PC-9 (cell line): ENCODE measurements at regions of chr4 and their contacts with region 1.

Region 1: GRCh38 chr4:185304944-185305690 is 90.6 kb downstream of the LRP2BP start:
- DNase-seq: no peak
- H3K4me3 ChIP-seq: no peak overlapping the region
- H3K27ac ChIP-seq: peak overlapping the region; percentile 31; the same call in 1 of the 2 replicates
- H3K4me1 ChIP-seq: peaks cover 15% of the 10 kb centered on the region
- H3K27me3 ChIP-seq: no peaks in the 10 kb centered on the region
- CTCF ChIP-seq: peak; percentile 29; the same call in 1 of the 2 replicates

Region 2: DNA sequence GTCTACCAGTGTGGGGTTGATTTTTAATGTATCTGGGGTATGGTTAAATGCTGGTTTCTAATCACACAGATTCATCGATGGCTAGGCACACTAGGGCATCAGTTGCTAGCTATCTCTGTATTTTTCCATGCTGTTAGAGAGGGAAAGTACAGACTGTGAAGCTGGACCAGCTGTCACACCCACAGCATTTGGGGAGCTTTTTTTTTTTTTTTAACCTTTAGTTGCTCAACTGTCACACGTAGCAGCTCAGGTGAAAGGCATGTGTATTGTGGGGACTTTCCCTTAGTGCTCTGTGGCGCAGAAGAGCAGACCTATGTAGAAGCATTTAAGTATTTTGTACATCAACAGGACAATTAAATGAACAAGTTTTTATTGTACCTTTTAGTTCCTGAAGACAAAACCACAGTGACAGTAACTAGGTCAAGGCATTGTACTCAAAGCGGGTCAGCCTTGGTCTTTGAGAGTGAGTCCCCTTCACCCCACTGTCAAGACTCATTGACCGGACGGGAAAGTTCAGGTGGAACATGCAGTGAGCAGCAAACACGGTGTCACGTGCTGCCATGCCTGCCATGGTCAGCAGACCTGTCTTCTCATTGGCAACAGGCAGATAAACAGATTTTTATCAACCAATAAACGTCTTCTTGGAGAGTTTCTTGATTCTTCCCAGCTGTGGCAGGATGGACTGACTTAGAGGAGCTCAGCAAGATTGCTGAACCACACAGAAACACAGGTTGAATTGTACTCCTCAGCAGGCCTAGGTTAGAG is 721.2 kb before region 1 on chr4:
- CTCF ChIA-PET with region 1: no interaction called
- POLR2A ChIA-PET with region 1: no interaction called
- intact Hi-C with region 1: no loop called
- DNase-seq: no peak
- H3K4me3 ChIP-seq: no peak overlapping the region
- H3K27ac ChIP-seq: no peak overlapping the region
- H3K4me1 ChIP-seq: no peaks in the 10 kb centered on the region
- H3K27me3 ChIP-seq: no peaks in the 10 kb centered on the region
- CTCF ChIP-seq: no peak

Region 3: GRCh38 chr4:185192059-185192458 is 113.1 kb before region 1 on chr4:
- CTCF ChIA-PET with region 1: no interaction called
- POLR2A ChIA-PET with region 1: no interaction called
- intact Hi-C with region 1: no loop called
- DNase-seq: no peak
- H3K4me3 ChIP-seq: no peak overlapping the region
- H3K27ac ChIP-seq: no peak overlapping the region
- H3K4me1 ChIP-seq: peaks cover 25% of the 10 kb centered on the region
- H3K27me3 ChIP-seq: no peaks in the 10 kb centered on the region
- CTCF ChIP-seq: no peak

Region 4: DNA sequence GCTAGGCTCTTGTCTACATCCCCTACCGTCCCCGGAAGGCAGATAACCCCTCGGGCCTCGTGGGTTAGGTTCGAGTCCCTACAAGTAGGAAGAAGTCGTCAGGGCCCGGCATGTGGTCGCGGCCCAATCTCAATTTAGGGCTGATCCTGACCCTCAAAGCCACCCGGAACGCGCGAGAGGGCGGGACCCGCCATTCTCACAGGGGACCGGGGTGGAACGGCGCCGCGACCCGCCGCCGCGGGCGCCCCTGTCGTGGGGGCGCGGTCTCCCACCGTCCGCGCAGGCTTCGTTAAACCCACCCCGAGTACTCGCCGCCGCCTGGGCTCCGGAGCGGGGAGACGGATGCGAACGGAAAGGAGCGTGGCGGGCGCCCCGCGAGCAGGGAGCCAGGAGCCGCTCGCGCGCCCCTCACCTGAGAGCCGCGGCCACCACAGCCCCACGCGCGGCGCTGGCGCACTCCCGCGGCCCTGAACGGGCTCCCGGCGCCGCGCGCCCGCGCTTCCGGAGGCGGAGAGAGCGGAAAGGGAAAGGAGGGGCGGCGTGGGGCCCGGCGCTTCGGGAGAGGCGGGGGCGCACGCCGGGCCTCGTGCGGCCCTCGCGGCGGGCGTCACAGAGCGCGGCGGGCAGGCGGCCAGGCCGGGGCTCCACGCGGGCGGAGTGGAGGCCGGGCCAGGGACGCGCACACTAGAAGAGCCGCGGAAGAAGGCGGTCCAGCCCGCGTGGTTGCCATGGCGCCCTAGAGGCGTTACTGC is 101.5 kb before region 1 on chr4 and contains the start of gene CFAP97:
- CTCF ChIA-PET with region 1: no interaction called
- POLR2A ChIA-PET with region 1: no interaction called
- intact Hi-C with region 1: loop called (anchors 5 kb)
- DNase-seq: peak; percentile 49 to 78
- H3K4me3 ChIP-seq: peak within 1 kb of the TSS; percentile 75
- H3K27ac ChIP-seq: peak within 1 kb of the TSS; percentile 76
- H3K4me1 ChIP-seq: peaks cover 35% of the 10 kb centered on the region
- H3K27me3 ChIP-seq: no peaks in the 10 kb centered on the region
- CTCF ChIP-seq: no peak
- total RNA-seq, gene CFAP97: 33.4 and 48.2 TPM in 2 replicates

Region 5: DNA sequence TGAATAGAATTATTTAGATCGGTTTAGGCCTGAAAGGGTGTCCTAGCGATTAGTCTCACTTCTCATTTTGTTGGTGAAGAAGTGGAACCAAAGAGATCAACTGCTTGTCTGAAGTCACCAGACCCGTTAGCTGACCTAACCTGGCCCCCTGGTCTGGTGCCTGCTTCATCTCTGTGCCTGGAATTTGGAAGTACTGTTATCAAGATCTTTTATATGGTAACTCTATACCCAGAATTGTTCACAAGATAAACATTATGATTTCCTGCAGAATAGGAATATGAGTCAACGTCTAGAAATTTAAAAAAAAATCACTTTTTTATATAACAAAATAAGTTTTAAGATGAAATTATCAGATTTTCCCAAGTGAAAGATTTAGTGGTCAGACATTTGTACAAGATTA is 53.4 kb after region 1 on chr4:
- CTCF ChIA-PET with region 1: no interaction called
- POLR2A ChIA-PET with region 1: no interaction called
- intact Hi-C with region 1: loop called (anchors 1 kb)
- DNase-seq: peak; percentile 53 to 73
- H3K4me3 ChIP-seq: no peak overlapping the region
- H3K27ac ChIP-seq: peak overlapping the region; percentile 53
- H3K4me1 ChIP-seq: peaks cover 18% of the 10 kb centered on the region
- H3K27me3 ChIP-seq: no peaks in the 10 kb centered on the region
- CTCF ChIP-seq: no peak

Region 6: DNA sequence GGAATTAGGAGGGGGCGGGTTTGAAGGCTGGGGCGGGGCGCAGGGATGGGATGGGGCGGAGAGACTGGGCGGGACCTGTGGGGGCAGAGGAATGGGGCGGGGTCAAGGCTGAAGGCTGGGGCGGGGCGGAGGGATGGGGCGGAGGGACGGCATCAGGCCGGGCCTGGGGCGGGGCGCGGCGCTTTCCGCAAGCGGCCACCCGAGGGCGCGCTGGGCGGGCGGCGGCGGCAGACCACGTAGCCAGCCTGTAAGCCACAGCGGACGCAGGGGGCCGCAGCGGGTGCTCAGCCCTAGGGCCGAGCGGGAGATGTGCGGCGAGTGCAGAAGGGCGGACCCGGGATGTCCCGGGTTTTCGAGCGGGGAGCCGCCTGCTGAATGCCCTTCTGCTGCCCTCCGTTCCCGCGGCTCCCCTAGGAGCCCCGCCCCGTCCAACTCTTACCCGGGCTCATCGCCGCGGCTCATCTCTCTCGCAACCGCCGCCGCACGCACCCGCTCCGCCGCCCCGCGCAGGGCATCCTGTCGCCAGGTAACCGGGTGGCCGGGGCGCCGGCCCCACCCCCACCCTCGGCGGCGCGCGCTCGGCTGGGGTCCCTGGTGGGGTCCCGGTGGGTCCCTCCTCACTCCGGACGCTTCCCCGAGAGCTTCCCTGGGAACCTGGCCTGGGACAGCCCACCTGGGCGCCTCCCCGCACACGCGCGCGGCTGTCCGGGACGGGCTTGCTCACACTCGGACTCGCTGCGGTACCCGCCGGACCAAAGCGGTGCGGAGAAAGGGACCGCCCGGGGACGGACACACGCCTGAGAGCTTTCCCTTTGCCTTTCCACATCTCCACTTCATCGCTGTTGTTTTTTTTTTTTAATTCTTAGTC is 166.4 kb after region 1 on chr4 and contains the start of gene CCDC110:
- CTCF ChIA-PET with region 1: no interaction called
- POLR2A ChIA-PET with region 1: no interaction called
- intact Hi-C with region 1: loop called (anchors 2 kb)
- DNase-seq: peak; percentile 46 to 91
- H3K4me3 ChIP-seq: peak within 1 kb of the TSS; percentile 73
- H3K27ac ChIP-seq: no peak within 1 kb of the TSS
- H3K4me1 ChIP-seq: 0 out of 2 replicates have a peak, but pooled peaks cover 4% of the 10 kb centered on the region
- H3K27me3 ChIP-seq: no peaks in the 10 kb centered on the region
- CTCF ChIP-seq: peak; percentile 52; the same call in 1 of the 2 replicates
- total RNA-seq, gene CCDC110: 2.1 and 4.3 TPM in 2 replicates